GM12878 (cell line): ENCODE measurements at regions of chr5 and their contacts with region 1.

Region 1: GRCh38 chr5:43631182-43631910 is 28.4 kb downstream of the NNT start:
- DNase-seq: peak; percentile 33
- ATAC-seq: peak; percentile 100
- H3K4me3 ChIP-seq: no peak overlapping the region
- H3K27ac ChIP-seq: no peak overlapping the region
- H3K4me1 ChIP-seq: no peaks in the 10 kb centered on the region
- H3K27me3 ChIP-seq: no peaks in the 10 kb centered on the region
- CTCF ChIP-seq: peak; percentile 48 to 71 (median 56)
- EP300 ChIP-seq: no peak
- POLR2A ChIP-seq: no peak
- RAD21 ChIP-seq: peak; percentile 36; the same call in 1 of the 2 replicates

Region 2: DNA sequence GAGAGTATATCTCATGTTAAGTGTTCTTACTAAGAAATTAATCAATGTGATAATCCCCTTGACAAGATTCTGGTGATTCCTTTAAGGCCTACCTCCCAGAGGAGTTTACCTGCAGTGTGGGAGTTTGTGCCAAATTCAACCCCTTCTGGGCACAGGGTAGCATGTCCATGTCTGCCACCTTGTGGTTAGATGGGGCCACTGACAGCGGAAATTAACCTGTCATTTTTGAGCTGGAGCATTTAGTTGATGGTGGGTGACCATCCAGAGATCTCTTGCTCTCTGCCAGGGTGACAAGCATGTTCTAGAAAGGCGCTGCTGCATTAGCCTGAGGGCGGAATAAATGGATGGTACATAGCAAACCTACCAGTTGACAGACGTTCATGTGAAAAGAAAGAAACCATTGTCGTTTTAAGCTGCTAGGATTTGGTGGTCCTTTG is 1574.1 kb before region 1 on chr5:
- CTCF ChIA-PET with region 1: no interaction called
- POLR2A ChIA-PET with region 1: no interaction called
- RAD21 ChIA-PET with region 1: no interaction called
- SMC1A ChIA-PET with region 1: no interaction called
- in situ Hi-C with region 1: no loop called
- intact Hi-C with region 1: no loop called
- DNase-seq: peak; percentile 20
- ATAC-seq: peak; percentile 96
- H3K4me3 ChIP-seq: no peak overlapping the region
- H3K27ac ChIP-seq: no peak overlapping the region
- H3K4me1 ChIP-seq: no peaks in the 10 kb centered on the region
- H3K27me3 ChIP-seq: no peaks in the 10 kb centered on the region
- CTCF ChIP-seq: peak; percentile 81 to 89 (median 82)
- EP300 ChIP-seq: no peak
- POLR2A ChIP-seq: no peak
- RAD21 ChIP-seq: peak; percentile 82

Region 3: GRCh38 chr5:43556857-43557542 is 74.3 kb before region 1 on chr5 and contains the start of gene PAIP1:
- CTCF ChIA-PET with region 1: interaction called, 25 read pairs
- POLR2A ChIA-PET with region 1: no interaction called
- RAD21 ChIA-PET with region 1: interaction called, 10 read pairs
- SMC1A ChIA-PET with region 1: interaction called, 10 read pairs
- in situ Hi-C with region 1: no loop called
- intact Hi-C with region 1: no loop called
- DNase-seq: peak; percentile 37
- ATAC-seq: peak; percentile 84
- H3K4me3 ChIP-seq: peak within 1 kb of the TSS; percentile 94
- H3K27ac ChIP-seq: peak within 1 kb of the TSS; percentile 87
- H3K4me1 ChIP-seq: peaks cover 13% of the 10 kb centered on the region
- H3K27me3 ChIP-seq: no peaks in the 10 kb centered on the region
- CTCF ChIP-seq: peak in 2 of 3 experiments; percentile 56 to 61; a peak in 5 of 6 replicates
- EP300 ChIP-seq: no peak
- POLR2A ChIP-seq: peak; percentile 86
- RAD21 ChIP-seq: no peak; the same call in 1 of the 2 replicates
- polyA plus RNA-seq, gene PAIP1: 37.4 to 52.7 TPM

Region 4: GRCh38 chr5:43609752-43610151 is 21.6 kb before region 1 on chr5:
- CTCF ChIA-PET with region 1: interaction called, 44 read pairs
- POLR2A ChIA-PET with region 1: no interaction called
- RAD21 ChIA-PET with region 1: interaction called, 4 read pairs
- SMC1A ChIA-PET with region 1: interaction called, 4 read pairs
- in situ Hi-C with region 1: no loop called
- intact Hi-C with region 1: no loop called
- DNase-seq: no peak
- ATAC-seq: peak; percentile 96
- H3K4me3 ChIP-seq: no peak overlapping the region
- H3K27ac ChIP-seq: no peak overlapping the region
- H3K4me1 ChIP-seq: no peaks in the 10 kb centered on the region
- H3K27me3 ChIP-seq: no peaks in the 10 kb centered on the region
- CTCF ChIP-seq: peak; percentile 42 to 59 (median 54); a peak in 5 of 6 replicates
- EP300 ChIP-seq: no peak
- POLR2A ChIP-seq: no peak
- RAD21 ChIP-seq: peak; percentile 56

Region 5: DNA sequence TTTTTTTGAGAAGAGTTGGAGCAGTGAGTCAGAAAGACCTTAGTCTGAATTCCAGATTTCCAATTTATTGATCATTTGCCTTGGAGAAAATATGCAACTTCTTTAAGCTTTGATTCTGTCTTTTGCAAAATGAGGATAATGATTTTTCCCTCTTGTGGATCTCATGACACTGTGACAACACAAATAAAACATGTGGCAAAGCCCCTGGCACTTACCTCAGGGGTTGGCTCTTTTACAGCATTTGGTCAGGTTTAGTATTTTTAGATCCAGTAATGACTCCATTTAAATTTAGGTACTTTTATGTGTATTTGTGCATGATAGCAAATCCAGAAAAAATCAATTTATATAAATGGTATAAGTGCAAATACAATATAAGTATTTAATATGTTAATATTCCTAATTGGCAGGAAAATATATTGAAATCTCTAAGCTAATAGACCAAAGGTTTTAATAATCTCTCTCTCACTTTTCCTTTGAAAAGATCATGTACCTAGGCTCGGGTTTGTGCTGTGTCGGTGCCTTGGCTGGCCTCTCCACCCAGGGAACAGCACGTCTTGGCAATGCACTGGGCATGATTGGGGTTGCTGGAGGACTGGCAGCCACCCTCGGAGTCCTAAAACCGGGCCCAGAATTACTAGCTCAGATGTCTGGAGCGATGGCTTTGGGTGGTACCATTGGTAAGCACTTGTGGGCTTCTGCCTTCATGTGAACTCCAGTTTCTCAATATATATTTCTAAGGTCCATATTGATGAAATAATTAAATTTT is 21.4 kb after region 1 on chr5:
- CTCF ChIA-PET with region 1: interaction called, 19 read pairs
- POLR2A ChIA-PET with region 1: no interaction called
- RAD21 ChIA-PET with region 1: no interaction called
- SMC1A ChIA-PET with region 1: no interaction called
- in situ Hi-C with region 1: no loop called
- intact Hi-C with region 1: no loop called
- DNase-seq: no peak
- ATAC-seq: no peak
- H3K4me3 ChIP-seq: no peak overlapping the region
- H3K27ac ChIP-seq: no peak overlapping the region
- H3K4me1 ChIP-seq: no peaks in the 10 kb centered on the region
- H3K27me3 ChIP-seq: no peaks in the 10 kb centered on the region
- CTCF ChIP-seq: no peak
- EP300 ChIP-seq: no peak
- POLR2A ChIP-seq: no peak
- RAD21 ChIP-seq: no peak

Region 6: GRCh38 chr5:43729846-43730478 is 98.6 kb after region 1 on chr5:
- CTCF ChIA-PET with region 1: interaction called, 11 read pairs
- POLR2A ChIA-PET with region 1: no interaction called
- RAD21 ChIA-PET with region 1: interaction called, 4 read pairs
- SMC1A ChIA-PET with region 1: interaction called, 3 read pairs
- in situ Hi-C with region 1: no loop called
- intact Hi-C with region 1: no loop called
- DNase-seq: no peak
- ATAC-seq: peak; percentile 40; the same call in 1 of the 3 replicates
- H3K4me3 ChIP-seq: no peak overlapping the region
- H3K27ac ChIP-seq: no peak overlapping the region
- H3K4me1 ChIP-seq: no peaks in the 10 kb centered on the region
- H3K27me3 ChIP-seq: no peaks in the 10 kb centered on the region; a peak in 1 of 4 replicates
- CTCF ChIP-seq: peak in 2 of 3 experiments; percentile 35 to 38; a peak in 4 of 6 replicates
- EP300 ChIP-seq: no peak
- POLR2A ChIP-seq: no peak
- RAD21 ChIP-seq: peak; percentile 54

Region 7: DNA sequence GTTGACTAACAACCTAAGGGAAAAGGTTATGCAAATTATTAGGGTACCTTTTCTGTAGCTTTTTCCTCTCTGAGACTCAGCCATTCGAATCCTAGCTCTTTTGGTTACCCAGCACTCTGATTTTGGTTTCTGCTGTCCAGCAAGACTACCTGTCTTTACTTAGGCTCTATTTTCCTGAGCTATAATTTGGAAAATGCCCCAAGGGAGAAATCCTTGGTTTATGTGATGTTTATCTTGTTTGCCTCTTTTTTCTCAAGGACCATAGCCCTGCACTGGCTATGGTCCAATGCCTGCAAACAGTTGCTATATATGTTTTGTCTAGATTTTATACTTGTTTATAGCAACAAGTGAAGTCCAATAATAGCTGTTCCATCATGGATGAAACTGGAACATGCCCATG is 404.3 kb after region 1 on chr5:
- CTCF ChIA-PET with region 1: no interaction called
- POLR2A ChIA-PET with region 1: no interaction called
- RAD21 ChIA-PET with region 1: no interaction called
- SMC1A ChIA-PET with region 1: no interaction called
- in situ Hi-C with region 1: no loop called
- intact Hi-C with region 1: no loop called
- DNase-seq: no peak
- ATAC-seq: no peak
- H3K4me3 ChIP-seq: no peak overlapping the region
- H3K27ac ChIP-seq: no peak overlapping the region
- H3K4me1 ChIP-seq: no peaks in the 10 kb centered on the region
- H3K27me3 ChIP-seq: no peaks in the 10 kb centered on the region
- CTCF ChIP-seq: no peak
- EP300 ChIP-seq: no peak
- POLR2A ChIP-seq: no peak
- RAD21 ChIP-seq: no peak